IMR-90 (cell line): ENCODE measurements at regions of chr11 and their contacts with region 1.

Region 1: DNA sequence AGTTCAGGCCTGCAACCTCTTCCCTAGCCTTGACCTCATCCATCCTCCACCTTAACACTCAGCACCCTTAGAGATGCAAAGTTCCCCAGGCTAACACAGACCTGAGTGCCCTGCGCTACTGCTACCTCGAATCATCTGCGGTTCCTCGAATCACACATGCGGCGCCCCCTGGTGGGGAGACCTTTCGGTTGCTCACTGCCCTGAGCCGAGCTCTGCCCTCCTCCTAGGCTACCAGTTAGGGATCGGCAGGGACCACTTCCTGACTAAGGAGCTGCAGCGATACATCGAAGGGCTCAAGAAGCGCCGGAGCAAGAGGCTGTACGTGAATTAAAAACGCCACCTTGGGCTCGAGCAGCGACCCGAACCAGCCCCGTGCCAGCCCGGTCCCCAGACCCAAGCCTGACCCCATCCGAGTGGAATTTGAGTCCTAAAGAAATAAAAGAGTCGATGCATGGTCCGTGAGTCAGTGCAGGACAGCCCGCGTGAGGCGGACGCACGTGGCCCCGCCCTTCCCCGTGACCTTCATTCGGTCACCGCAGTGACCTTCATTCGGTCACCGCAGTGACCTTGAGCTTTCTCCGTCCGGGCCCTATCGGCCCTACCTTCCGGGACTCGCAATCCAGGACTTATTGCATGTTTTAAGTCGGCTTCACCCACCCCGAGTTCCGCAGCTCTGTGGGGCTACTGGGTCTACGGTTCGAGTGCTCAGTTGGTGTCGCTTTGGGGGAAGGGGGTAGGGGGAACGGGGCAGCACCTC is 830 bp upstream of the ESRRA start:
- DNase-seq: peak; percentile 85
- ATAC-seq: peak; percentile 33
- H3K4me3 ChIP-seq: peak overlapping the region; percentile 53
- H3K27ac ChIP-seq: peak overlapping the region; percentile 38
- H3K4me1 ChIP-seq: peaks cover 12% of the 10 kb centered on the region
- H3K27me3 ChIP-seq: peaks cover 14% of the 10 kb centered on the region
- CTCF ChIP-seq: peak; percentile 80
- POLR2A ChIP-seq: no peak
- RAD21 ChIP-seq: peak; percentile 61

Region 2: GRCh38 chr11:64000026-64000739 is 304.3 kb before region 1 on chr11:
- CTCF ChIA-PET with region 1: no interaction called
- POLR2A ChIA-PET with region 1: no interaction called
- dilution Hi-C with region 1: no loop called
- in situ Hi-C with region 1: no loop called
- intact Hi-C with region 1: loop called (anchors 10 kb)
- DNase-seq: peak; percentile 59
- ATAC-seq: peak; percentile 87
- H3K4me3 ChIP-seq: no peak overlapping the region
- H3K27ac ChIP-seq: no peak overlapping the region
- H3K4me1 ChIP-seq: 0 out of 2 replicates have a peak, but pooled peaks cover 1% of the 10 kb centered on the region
- H3K27me3 ChIP-seq: no peaks in the 10 kb centered on the region
- CTCF ChIP-seq: peak; percentile 78
- POLR2A ChIP-seq: no peak
- RAD21 ChIP-seq: peak; percentile 85

Region 3: GRCh38 chr11:64204464-64204989 is 100.0 kb before region 1 on chr11:
- CTCF ChIA-PET with region 1: interaction called, 12 read pairs
- POLR2A ChIA-PET with region 1: interaction called, 5 read pairs
- dilution Hi-C with region 1: no loop called
- in situ Hi-C with region 1: loop called (anchors 5 kb)
- intact Hi-C with region 1: loop called (anchors 1 kb)
- DNase-seq: peak; percentile 96
- ATAC-seq: peak; percentile 72
- H3K4me3 ChIP-seq: no peak overlapping the region
- H3K27ac ChIP-seq: no peak overlapping the region
- H3K4me1 ChIP-seq: peaks cover 10% of the 10 kb centered on the region
- H3K27me3 ChIP-seq: no peaks in the 10 kb centered on the region
- CTCF ChIP-seq: peak; percentile 96
- POLR2A ChIP-seq: no peak
- RAD21 ChIP-seq: peak; percentile 96

Region 4: DNA sequence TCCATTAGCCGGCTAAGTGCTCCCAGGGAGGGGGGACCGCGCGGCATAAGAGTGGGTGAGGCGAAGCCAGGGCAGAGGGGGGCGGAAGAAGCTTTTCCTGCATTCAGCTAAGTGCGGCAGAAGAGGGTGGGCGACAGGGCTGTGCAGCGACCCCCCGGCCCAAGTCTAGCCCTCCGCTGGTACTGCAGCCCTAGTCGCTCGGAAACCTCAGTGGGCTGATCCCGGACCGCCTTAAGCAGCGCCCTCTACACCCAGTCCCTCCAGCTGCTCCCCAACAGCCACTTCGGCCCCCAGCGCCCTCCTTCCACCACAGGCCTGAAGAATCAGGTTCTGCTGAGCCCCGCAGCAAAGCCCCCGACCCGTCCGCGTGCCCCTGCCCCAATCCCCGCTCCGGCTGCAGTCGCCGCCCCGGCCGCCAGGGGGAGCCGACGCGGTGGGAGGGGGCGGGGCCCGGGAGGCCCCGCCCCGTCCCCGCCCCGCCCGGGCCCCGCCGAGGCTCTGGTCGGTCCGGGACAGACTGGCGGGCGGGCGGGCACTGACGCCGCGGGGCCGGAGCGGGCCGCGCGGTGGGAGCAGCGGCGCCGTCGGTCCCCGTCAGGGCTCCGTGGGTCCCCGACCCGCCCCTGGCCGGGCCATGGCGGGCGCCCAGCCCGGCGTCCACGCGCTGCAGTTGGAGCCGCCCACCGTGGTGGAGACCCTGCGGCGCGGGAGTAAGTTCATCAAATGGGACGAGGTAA is 53.3 kb before region 1 on chr11 and contains the start of gene PLCB3:
- CTCF ChIA-PET with region 1: interaction called, 7 read pairs
- POLR2A ChIA-PET with region 1: no interaction called
- dilution Hi-C with region 1: no loop called
- in situ Hi-C with region 1: no loop called
- intact Hi-C with region 1: loop called (anchors 1 kb)
- DNase-seq: no peak
- ATAC-seq: peak; percentile 66
- H3K4me3 ChIP-seq: peak within 1 kb of the TSS; percentile 98
- H3K27ac ChIP-seq: peak within 1 kb of the TSS; percentile 88
- H3K4me1 ChIP-seq: peaks cover 10% of the 10 kb centered on the region
- H3K27me3 ChIP-seq: no peaks in the 10 kb centered on the region
- CTCF ChIP-seq: peak; percentile 72
- POLR2A ChIP-seq: peak; percentile 46; the same call in 1 of the 2 replicates
- RAD21 ChIP-seq: no peak
- total RNA-seq, gene PLCB3: 24.9 and 26.9 TPM in 2 replicates

Region 5: DNA sequence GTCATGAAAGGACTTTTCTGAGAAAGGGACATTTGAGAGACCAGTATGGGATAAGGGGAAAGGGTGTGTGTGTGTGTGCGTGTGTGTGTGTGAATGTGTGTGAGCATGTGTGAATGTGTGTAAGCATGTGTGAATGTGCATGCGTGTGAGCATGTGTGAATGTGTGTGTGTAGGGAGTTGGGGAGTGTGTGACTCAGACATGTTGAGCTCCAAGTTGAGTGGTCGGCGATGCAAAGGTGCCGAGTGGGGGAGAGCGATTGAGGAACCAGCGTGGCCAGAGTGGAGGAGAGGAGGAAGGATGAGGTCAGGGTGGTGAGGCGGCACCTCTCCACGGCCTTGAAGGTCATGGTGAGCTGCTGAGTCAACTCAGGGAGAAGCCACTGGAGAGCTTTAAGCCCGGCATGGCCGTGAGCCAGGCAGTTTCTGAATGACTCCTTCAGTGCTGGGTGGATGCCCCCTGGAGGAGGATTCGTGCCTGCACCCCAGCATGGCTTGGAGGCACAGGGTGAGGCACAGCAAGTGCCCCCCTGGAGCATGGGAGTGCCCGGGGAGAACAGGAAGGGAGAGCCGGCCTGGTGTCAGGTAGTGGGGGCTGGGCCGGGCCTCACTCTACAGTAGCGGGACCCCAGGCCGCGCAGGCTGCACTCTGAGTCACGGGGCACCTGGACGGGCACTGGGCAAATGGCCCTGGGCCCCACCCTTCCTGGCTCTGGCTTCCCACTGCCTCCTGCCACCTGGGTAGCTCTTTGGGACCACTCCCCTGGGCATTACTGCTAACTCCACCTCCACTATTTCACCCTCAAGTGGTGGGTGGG is 27.3 kb after region 1 on chr11:
- CTCF ChIA-PET with region 1: interaction called, 4 read pairs
- POLR2A ChIA-PET with region 1: no interaction called
- dilution Hi-C with region 1: no loop called
- in situ Hi-C with region 1: no loop called
- intact Hi-C with region 1: loop called (anchors 1 kb)
- DNase-seq: peak; percentile 87
- ATAC-seq: peak; percentile 84
- H3K4me3 ChIP-seq: no peak overlapping the region
- H3K27ac ChIP-seq: no peak overlapping the region
- H3K4me1 ChIP-seq: peaks cover 7% of the 10 kb centered on the region
- H3K27me3 ChIP-seq: no peaks in the 10 kb centered on the region; the same call in 1 of the 2 replicates
- CTCF ChIP-seq: peak; percentile 69
- POLR2A ChIP-seq: no peak
- RAD21 ChIP-seq: peak; percentile 60

Region 6: DNA sequence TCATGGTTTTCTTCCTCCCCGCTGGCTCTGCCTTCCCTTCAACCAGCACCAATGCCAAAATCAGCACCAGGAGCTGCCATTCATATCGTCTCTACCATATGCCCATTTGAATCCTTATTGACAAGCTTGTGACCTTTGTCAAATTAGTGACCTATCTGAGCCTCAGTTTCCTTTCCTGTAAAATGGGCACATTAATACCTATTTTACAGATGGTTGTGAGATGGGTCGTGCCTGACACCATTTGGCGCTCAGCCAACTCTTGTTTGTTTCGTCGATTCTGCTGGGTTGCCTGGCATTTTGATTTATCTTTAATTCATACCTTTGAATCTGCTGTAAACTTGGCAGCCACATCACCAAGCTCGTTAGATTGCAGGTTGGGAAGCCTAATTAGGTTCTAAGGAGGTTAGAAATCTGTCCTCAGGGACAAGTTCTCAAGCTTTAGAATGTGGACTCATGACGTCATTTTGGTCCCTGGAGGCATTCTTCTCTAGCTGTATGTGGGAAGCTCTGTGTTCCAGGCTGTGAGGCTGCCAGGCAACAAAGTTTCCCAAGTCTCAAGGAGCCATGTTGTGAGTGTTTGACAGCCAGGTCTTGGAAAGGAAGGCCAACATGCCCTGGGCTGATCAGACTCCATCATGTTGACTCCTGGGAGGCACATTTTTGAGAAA is 115.5 kb after region 1 on chr11:
- CTCF ChIA-PET with region 1: no interaction called
- POLR2A ChIA-PET with region 1: no interaction called
- dilution Hi-C with region 1: no loop called
- in situ Hi-C with region 1: no loop called
- intact Hi-C with region 1: no loop called
- DNase-seq: no peak
- ATAC-seq: no peak
- H3K4me3 ChIP-seq: no peak overlapping the region
- H3K27ac ChIP-seq: no peak overlapping the region
- H3K4me1 ChIP-seq: no peaks in the 10 kb centered on the region
- H3K27me3 ChIP-seq: peaks cover 10% of the 10 kb centered on the region
- CTCF ChIP-seq: no peak
- POLR2A ChIP-seq: no peak
- RAD21 ChIP-seq: no peak